ENCODE measurements at regions of chr1 and their contacts with region 1.

Region 1: GRCh38 chr1:15617175-15617880 is at the start of gene DDI2:
- DNase-seq: peak; percentile 96
- H3K4me3 Mint-ChIP-seq: peak within 1 kb of the TSS; percentile 95
- H3K27ac Mint-ChIP-seq: peak within 1 kb of the TSS; percentile 93
- H3K4me1 Mint-ChIP-seq: peaks cover 33% of the 10 kb centered on the region
- H3K27me3 Mint-ChIP-seq: no peaks in the 10 kb centered on the region
- total RNA-seq, gene DDI2: 26.3 to 28.2 TPM

Region 2: GRCh38 chr1:15501208-15502032 is 115.9 kb before region 1 on chr1:
- CTCF ChIA-PET with region 1: no interaction called
- POLR2A ChIA-PET with region 1: no interaction called
- intact Hi-C with region 1: no loop called
- DNase-seq: peak; percentile 73
- H3K4me3 Mint-ChIP-seq: no peak overlapping the region
- H3K27ac Mint-ChIP-seq: no peak overlapping the region
- H3K4me1 Mint-ChIP-seq: no peaks in the 10 kb centered on the region
- H3K27me3 Mint-ChIP-seq: no peaks in the 10 kb centered on the region

Region 3: DNA sequence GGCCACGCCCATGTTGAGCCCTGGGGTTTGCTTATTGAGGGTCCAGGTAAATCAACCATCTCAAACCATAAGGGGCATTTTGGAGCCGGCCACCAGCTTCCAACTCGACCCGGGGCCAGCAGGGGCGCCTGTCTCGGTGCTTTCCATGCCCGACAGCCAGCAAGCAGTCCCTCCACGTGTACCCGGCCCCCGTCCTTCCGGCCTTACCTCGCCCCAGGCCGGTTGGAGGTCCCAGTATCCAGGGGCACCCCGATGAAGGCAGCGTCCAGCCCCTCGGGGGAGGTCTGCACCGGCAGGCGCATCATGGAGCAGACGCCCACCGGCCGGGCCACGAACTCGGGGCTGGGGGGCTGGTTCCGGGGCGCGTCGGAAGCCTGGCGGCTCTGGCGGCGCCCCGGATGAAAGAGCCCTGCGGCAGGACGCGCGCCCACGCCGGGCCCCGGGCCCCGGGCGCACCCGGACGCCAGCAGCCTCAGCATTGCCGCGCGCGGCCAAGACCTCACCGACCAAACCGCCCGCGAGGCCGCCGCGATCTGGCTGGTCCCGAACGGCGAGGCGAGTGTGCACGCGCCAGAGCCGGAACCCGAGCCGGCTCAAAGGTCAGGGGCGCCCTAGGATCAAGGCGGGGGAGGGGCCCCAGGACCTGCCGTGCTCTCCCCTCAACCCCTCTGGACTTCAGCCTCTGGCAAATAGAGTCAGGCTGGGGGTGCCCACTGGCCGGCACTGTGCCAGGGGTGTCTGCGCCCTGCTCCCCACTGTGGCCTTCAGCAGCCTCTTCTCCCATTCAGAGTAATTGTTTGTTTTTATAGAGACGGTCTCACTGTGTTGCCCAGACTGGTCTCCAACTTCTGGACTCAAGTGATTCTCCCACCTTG is 32.6 kb before region 1 on chr1 and contains the start of gene AGMAT:
- CTCF ChIA-PET with region 1: interaction called, 4 read pairs
- POLR2A ChIA-PET with region 1: interaction called, 3 read pairs
- intact Hi-C with region 1: loop called (anchors 1 kb)
- DNase-seq: peak; percentile 79
- H3K4me3 Mint-ChIP-seq: peak within 1 kb of the TSS; percentile 79
- H3K27ac Mint-ChIP-seq: peak within 1 kb of the TSS; percentile 76
- H3K4me1 Mint-ChIP-seq: peaks cover 23% of the 10 kb centered on the region
- H3K27me3 Mint-ChIP-seq: no peaks in the 10 kb centered on the region
- total RNA-seq, gene AGMAT: 13.9 to 15.2 TPM

Region 4: DNA sequence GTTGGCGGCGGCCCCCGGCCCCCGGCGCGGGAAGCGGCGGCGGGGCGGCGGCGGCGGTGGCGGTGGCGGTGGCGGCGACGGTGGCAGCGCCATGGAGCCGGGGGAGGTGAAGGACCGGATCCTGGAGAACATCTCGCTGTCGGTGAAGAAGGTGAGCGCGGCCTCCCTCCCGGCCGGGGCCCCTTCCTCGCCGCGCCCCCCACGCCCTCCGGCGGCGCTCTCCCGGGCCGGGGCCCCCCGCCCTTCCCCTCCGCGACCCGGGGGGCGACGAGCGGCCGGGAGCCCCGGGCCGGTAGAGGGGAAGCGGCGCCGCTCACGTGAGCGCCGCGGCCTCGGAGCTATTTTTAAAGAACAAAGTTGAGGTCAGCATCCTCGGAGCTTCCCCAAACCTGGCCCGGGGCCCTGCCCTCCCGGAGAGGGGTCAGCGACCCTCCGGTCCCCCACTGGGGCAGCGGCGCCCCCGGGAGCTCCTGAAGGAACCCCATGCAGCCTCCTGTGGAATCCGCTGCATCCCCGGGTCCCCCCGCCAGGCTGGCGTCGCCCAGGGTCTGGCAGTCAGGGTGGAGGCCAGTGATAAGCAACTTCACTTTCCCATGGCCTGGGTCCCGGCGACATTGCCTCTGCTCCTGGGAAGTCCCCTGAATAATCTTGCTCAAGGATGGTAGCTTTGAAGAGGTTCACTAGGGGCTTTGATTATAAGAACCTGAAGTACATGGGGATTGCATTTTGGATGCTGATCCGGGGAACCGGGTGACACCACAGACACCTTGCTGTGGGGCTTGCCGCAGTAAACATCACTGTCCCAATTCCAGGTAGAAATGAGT is 67.4 kb after region 1 on chr1:
- CTCF ChIA-PET with region 1: interaction called, 3 read pairs
- POLR2A ChIA-PET with region 1: interaction called, 6 read pairs
- intact Hi-C with region 1: loop called (anchors 1 kb)
- DNase-seq: peak; percentile 50
- H3K4me3 Mint-ChIP-seq: peak overlapping the region; percentile 86
- H3K27ac Mint-ChIP-seq: peak overlapping the region; percentile 87
- H3K4me1 Mint-ChIP-seq: peaks cover 39% of the 10 kb centered on the region
- H3K27me3 Mint-ChIP-seq: no peaks in the 10 kb centered on the region

Region 5: GRCh38 chr1:15847100-15847892 is 230.0 kb after region 1 on chr1 and contains the start of gene SPEN:
- CTCF ChIA-PET with region 1: no interaction called
- POLR2A ChIA-PET with region 1: interaction called, 4 read pairs
- intact Hi-C with region 1: loop called (anchors 2 kb)
- DNase-seq: peak; percentile 98
- H3K4me3 Mint-ChIP-seq: peak within 1 kb of the TSS; percentile 98
- H3K27ac Mint-ChIP-seq: peak within 1 kb of the TSS; percentile 93
- H3K4me1 Mint-ChIP-seq: peaks cover 45% of the 10 kb centered on the region
- H3K27me3 Mint-ChIP-seq: no peaks in the 10 kb centered on the region
- total RNA-seq, gene SPEN: 37.0 to 41.9 TPM

Region 6: GRCh38 chr1:16440470-16441281 is 823.3 kb after region 1 on chr1 and contains the start of gene NECAP2:
- CTCF ChIA-PET with region 1: no interaction called
- POLR2A ChIA-PET with region 1: no interaction called
- intact Hi-C with region 1: loop called (anchors 5 kb)
- DNase-seq: peak; percentile 96
- H3K4me3 Mint-ChIP-seq: peak within 1 kb of the TSS; percentile 87
- H3K27ac Mint-ChIP-seq: peak within 1 kb of the TSS; percentile 86
- H3K4me1 Mint-ChIP-seq: peaks cover 37% of the 10 kb centered on the region
- H3K27me3 Mint-ChIP-seq: no peaks in the 10 kb centered on the region
- total RNA-seq, gene NECAP2: 76.4 to 82.0 TPM

Measured in activated CD4-positive, alpha-beta memory T cell treated with anti-CD3 and anti-CD28 coated beads for 36 hours (primary cell).